Dendritic cell treated with granulocyte-macrophage colony-stimulating factor and Interleukin-4, amounts not matched to agents 40 ng/mL and 50 ng/mL, for 4 days (primary cell): ENCODE measurements at regions of chr15 and their contacts with region 1.

Region 1: GRCh38 chr15:55108858-55109518 is 87.8 kb downstream of the RSL24D1 start:
- H3K4me3 Mint-ChIP-seq: no peak overlapping the region
- H3K27ac Mint-ChIP-seq: no peak overlapping the region
- H3K4me1 Mint-ChIP-seq: peaks cover 24% of the 10 kb centered on the region
- H3K27me3 Mint-ChIP-seq: no peaks in the 10 kb centered on the region

Region 2: DNA sequence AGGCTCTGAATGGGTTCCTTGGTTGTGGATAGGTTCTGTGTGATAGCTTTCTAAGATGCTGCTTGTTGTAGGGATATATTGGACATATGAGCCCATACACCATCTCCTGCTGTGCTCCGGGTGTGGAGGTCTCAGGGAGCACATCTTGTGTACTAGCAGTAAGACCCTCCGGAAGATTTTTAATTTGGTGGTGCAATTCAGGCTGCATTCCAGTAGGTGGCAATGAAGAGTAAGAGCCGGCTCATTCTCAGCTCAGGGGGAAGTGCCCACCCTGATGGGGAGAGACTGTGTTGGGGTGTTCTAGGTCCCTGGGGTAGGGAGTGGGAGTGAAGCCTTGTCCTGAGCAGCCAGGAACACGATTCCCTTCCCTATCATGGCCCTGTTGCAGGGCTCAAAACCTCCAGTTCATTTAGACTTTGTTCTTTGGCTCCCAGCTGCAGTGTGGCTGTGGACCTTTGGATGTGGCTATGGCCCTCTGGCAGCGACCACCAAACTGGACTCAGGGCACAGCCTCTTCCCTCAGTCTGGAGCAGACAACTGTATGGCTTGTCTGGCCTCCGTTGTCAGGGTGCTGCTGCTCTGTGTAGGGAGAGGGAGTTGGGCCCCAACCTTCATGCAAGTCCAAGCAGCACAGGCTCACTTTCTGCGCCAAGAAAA is 1026.0 kb before region 1 on chr15:
- intact Hi-C with region 1: loop called (anchors 2 kb)
- H3K4me3 Mint-ChIP-seq: no peak overlapping the region
- H3K27ac Mint-ChIP-seq: no peak overlapping the region
- H3K4me1 Mint-ChIP-seq: no peaks in the 10 kb centered on the region
- H3K27me3 Mint-ChIP-seq: peaks cover 2% of the 10 kb centered on the region

Region 3: DNA sequence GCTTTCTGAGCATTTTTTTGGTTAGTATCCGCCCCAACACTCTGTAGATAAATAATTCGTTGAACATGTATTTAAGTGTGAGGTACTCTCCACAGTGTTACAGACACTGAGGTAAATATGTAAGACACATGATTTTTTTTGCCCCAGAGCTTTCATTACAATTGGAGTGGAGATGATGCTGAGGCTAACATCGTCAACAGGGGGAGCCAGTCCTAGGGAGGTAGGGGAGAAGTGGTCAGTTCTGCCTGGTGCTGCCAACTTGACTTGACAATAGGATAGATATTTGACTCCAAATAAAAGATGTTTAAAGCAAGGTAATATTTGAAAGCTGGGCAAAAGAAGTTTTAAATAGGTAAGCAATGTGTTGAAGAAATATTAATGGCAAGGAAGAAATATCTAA is 835.1 kb before region 1 on chr15:
- intact Hi-C with region 1: loop called (anchors 10 kb)
- H3K4me3 Mint-ChIP-seq: no peak overlapping the region
- H3K27ac Mint-ChIP-seq: no peak overlapping the region
- H3K4me1 Mint-ChIP-seq: no peaks in the 10 kb centered on the region
- H3K27me3 Mint-ChIP-seq: no peaks in the 10 kb centered on the region

Region 4: DNA sequence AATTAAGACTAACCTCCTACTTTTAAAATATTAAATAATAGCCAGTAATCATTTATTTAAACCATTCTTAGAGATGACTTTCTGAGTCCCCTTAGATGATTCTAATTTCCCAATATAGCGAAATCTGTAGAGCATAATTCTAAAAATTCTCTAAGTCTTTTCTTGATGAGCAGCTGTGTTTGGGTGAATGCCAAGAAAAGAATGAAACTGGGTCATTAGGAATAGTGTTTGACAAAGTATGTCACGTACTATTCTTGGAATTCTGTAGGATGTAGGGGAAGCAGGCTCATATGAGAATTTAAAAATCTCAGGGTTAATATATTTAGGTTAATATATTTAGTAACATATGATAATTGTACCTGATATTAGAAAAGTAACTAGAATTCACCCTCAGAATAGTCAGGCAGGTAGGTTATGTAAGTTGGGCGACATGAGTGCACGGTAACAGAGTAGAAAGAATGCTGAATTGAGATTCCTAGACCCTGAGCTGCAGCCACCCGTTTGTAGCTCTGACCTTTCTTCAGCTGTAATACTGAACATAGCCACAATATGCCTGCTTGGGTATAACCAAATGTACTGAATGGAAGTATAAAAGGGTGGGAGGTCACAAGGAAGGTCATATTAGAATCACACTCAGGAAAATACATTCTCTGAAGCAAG is 606.4 kb before region 1 on chr15:
- intact Hi-C with region 1: loop called (anchors 10 kb)
- H3K4me3 Mint-ChIP-seq: no peak overlapping the region
- H3K27ac Mint-ChIP-seq: no peak overlapping the region
- H3K4me1 Mint-ChIP-seq: no peaks in the 10 kb centered on the region
- H3K27me3 Mint-ChIP-seq: peaks cover 2% of the 10 kb centered on the region

Region 5: DNA sequence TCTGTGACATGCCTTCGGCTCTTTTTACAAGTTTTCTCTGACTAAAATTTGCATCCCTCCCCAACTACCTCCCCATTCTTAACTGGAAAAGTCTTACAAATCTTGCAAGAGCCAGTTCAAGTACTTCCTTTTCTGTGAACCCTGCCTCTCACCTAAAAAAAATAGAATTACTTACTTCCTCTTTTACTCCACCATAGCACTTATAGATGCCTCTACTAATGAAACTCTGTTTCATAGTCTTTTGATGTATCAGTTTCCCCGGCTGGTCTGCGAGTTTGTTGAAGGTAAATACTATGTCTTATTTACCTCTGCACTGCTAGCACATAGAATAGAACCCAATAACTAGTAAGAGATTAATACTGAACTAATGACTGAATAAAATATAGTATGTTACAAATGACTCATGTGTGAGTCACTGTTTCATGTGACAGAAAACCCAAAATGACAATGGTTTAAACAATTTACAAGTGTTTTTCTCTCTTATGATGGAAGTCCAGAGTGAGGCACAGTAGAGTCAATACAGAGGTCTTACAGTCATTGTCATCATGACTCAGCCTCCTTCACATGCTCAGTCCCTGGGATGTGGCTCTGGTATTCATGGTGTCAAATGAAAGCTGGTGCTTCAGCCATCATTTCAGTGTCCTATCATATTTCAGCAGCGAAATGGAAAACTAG is 305.7 kb before region 1 on chr15:
- intact Hi-C with region 1: loop called (anchors 10 kb)
- H3K4me3 Mint-ChIP-seq: no peak overlapping the region
- H3K27ac Mint-ChIP-seq: peak overlapping the region; percentile 77
- H3K4me1 Mint-ChIP-seq: peaks cover 15% of the 10 kb centered on the region
- H3K27me3 Mint-ChIP-seq: no peaks in the 10 kb centered on the region

Region 6: DNA sequence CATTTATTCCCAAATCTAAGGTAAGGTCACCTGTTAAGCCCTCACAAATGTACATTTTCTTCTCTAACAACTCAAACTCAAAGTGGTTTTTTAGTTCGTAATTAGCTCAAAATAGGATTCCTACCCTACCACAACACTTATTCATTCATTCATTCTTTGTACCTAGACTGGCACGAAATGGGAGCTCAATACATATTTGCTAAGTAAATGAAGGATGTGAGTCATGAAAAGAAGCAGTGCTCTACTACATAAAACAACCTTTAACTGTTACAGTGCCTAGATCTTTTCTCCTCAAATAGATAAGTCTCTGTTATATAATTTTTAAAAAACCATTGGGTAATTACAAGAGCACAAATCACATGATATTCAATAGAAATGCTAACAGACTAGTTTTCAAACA is 74.7 kb after region 1 on chr15:
- intact Hi-C with region 1: no loop called
- H3K4me3 Mint-ChIP-seq: no peak overlapping the region
- H3K27ac Mint-ChIP-seq: no peak overlapping the region
- H3K4me1 Mint-ChIP-seq: peaks cover 12% of the 10 kb centered on the region
- H3K27me3 Mint-ChIP-seq: no peaks in the 10 kb centered on the region